Tibial artery (tissue), 4 donors: ENCODE measurements at regions of chr11 and their contacts with region 1.

Region 1: GRCh38 chr11:2885676-2886081 is at the start of gene CDKN1C:
- DNase-seq: peak; percentile 91 to 96
- H3K4me3 ChIP-seq: peak within 1 kb of the TSS; percentile 87 to 89
- H3K27ac ChIP-seq: peak within 1 kb of the TSS; percentile 82 to 84
- H3K4me1 ChIP-seq: peaks cover 0 to 40% (median 14%) of the 10 kb centered on the region in 4 donors
- H3K27me3 ChIP-seq: peaks cover 0 to 5% of the 10 kb centered on the region in 2 donors
- CTCF ChIP-seq: peak in 1 of 2 experiments; percentile 11

Region 2: GRCh38 chr11:2699531-2700414 is 185.9 kb before region 1 on chr11 and contains the start of gene KCNQ1OT1:
- intact Hi-C with region 1: loop called (anchors 5 kb)
- DNase-seq: peak; percentile 88 to 96
- H3K4me3 ChIP-seq: peak within 1 kb of the TSS; percentile 66 to 82
- H3K27ac ChIP-seq: peak within 1 kb of the TSS; percentile 83 to 95
- H3K4me1 ChIP-seq: peaks cover 0 to 28% (median 2%) of the 10 kb centered on the region in 4 donors
- H3K27me3 ChIP-seq: no peaks in the 10 kb centered on the region
- CTCF ChIP-seq: no peak

Region 3: DNA sequence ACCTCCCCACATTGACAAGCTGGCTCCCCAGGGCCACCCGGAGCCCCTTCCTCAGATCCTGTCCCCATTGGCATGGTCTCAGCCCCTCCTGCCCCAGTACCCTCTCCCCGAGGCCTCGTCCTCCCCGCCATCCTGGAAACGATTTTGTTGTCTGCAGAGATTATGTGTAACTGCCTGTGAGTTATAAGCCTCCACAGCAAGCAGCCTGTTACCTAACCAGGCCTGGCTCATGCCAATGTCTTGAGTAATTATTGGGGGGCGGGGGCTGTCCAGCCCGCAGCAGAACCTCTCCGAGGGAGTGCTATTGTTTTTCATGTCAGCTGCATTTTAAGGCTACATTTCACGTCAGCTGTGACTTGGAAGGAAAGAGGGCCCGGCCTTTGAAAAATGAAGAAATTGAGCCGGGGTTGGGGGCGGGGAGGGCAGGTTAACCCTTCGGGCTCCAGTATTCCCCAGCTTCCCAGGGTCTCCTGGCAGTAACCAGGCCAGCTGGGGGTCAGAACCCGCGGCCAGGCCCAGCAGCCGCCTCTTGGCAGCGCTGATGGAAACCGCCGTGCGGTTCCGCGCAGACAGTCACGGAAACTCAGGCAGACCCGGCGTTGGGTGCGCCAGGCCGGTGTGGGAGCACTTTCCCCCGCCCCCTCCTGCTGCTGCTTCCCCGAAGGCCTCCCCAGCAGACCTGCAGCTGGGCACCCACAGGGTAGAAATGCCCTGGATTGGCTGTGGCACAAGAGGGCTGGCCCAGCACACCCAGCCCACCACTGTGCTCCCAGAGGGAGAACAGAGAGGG is 59.6 kb before region 1 on chr11:
- intact Hi-C with region 1: loop called (anchors 5 kb)
- DNase-seq: peak; percentile 88 to 93
- H3K4me3 ChIP-seq: peak overlapping the region; percentile 16 to 37
- H3K27ac ChIP-seq: peak overlapping the region; percentile 83 to 89
- H3K4me1 ChIP-seq: peaks cover 4 to 40% (median 26%) of the 10 kb centered on the region in 4 donors
- H3K27me3 ChIP-seq: no peaks in the 10 kb centered on the region
- CTCF ChIP-seq: no peak